ENCODE measurements at regions of chr10 and their contacts with region 1.

Region 1: DNA sequence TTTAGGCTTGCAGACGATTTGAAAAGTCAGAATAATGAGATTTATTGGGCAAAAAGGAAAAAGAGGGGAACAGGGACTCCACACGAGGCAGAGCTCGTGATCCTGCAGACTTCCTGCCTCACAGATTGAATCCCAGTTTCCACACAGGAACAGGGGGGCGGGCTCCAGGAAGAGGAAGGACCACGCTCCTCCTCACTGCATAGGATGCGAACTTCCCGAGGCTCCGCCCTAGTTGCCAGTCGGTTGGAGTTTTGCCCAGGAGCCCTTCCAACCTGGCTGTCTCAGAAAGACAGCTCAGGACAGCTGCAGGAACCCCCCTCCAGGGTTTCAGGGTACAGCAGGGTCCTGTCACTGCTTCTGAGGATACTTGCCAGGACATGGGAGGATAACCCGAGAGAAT is 488.3 kb upstream of the ADARB2 start:
- DNase-seq: no peak
- H3K4me3 ChIP-seq: no peak overlapping the region
- H3K27ac ChIP-seq: no peak overlapping the region
- H3K4me1 ChIP-seq: no peaks in the 10 kb centered on the region
- CTCF ChIP-seq: no peak

Region 2: DNA sequence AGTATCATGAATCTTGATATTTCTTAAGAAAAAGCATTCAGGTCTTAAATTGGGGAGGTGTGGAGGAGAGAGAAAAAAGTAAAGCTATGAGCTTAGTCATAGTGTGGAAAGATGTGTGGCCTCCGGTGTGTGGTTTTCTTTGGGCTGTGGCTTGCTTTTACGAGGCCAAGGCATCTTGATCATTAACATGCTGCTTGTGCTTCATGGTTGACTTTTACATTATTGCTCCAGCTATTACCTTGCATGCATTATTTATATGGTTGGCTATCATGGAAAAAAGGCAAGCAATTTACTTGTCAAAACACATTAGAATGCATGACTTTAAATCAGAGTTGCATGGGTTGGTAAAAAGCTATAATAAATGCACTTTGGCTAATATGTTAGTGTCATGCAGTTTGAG is 187.6 kb before region 1 on chr10:
- CTCF ChIA-PET with region 1: no interaction called
- POLR2A ChIA-PET with region 1: no interaction called
- intact Hi-C with region 1: no loop called
- DNase-seq: no peak
- H3K4me3 ChIP-seq: no peak overlapping the region
- H3K27ac ChIP-seq: no peak overlapping the region
- H3K4me1 ChIP-seq: no peaks in the 10 kb centered on the region
- CTCF ChIP-seq: no peak

Region 3: GRCh38 chr10:2165771-2166460 is 59.7 kb before region 1 on chr10:
- CTCF ChIA-PET with region 1: no interaction called
- POLR2A ChIA-PET with region 1: no interaction called
- intact Hi-C with region 1: no loop called
- DNase-seq: no peak
- H3K4me3 ChIP-seq: no peak overlapping the region
- H3K27ac ChIP-seq: no peak overlapping the region
- H3K4me1 ChIP-seq: no peaks in the 10 kb centered on the region
- CTCF ChIP-seq: no peak

Region 4: DNA sequence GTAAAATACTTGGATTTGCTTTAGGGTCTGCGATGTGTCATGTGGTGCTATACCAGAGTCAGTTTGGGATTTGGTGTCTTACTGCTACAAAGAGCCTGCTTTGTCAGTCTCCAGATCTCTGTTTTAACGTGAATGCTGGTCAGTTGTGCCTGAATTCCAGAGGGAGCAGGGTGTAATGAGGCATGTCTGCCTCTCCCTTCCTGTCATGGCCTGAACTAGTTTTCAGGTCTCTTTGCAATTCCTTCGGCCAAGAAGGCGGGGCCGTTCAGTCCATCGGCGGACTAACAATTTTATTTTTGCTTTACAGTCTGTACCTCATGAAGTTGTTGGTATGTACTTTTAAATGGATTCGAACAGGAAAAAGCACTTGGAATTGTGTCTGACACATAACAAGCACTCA is 23.2 kb before region 1 on chr10:
- CTCF ChIA-PET with region 1: no interaction called
- POLR2A ChIA-PET with region 1: no interaction called
- intact Hi-C with region 1: no loop called
- DNase-seq: no peak
- H3K4me3 ChIP-seq: no peak overlapping the region
- H3K27ac ChIP-seq: no peak overlapping the region
- H3K4me1 ChIP-seq: no peaks in the 10 kb centered on the region
- CTCF ChIP-seq: no peak

Region 5: GRCh38 chr10:2280713-2281300 is 55.2 kb after region 1 on chr10:
- CTCF ChIA-PET with region 1: no interaction called
- POLR2A ChIA-PET with region 1: no interaction called
- intact Hi-C with region 1: loop called (anchors 2 kb)
- DNase-seq: no peak
- H3K4me3 ChIP-seq: no peak overlapping the region
- H3K27ac ChIP-seq: no peak overlapping the region
- H3K4me1 ChIP-seq: no peaks in the 10 kb centered on the region
- CTCF ChIP-seq: no peak

Region 6: DNA sequence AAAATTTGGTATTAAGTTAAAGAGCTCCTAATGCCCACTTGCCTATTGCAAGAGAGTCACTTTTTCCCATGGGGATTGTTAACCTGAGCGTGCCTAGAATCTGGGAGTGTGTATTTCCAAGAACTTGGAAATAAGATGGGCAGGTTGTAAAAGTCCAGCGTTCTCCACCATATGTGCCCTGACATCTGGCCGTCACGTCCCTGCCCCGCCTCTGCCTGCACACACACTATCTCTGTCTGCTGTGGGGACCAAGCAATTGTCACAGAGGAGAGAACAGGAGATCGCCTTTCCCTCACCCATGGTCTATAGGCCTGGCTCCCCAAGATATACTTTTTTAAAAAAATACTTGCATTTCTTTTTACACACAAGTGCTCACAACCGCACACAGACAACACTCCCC is 445.3 kb after region 1 on chr10:
- CTCF ChIA-PET with region 1: no interaction called
- POLR2A ChIA-PET with region 1: no interaction called
- intact Hi-C with region 1: no loop called
- DNase-seq: no peak
- H3K4me3 ChIP-seq: no peak overlapping the region
- H3K27ac ChIP-seq: no peak overlapping the region
- H3K4me1 ChIP-seq: no peaks in the 10 kb centered on the region
- CTCF ChIP-seq: no peak